ENCODE measurements at regions of chr12 and their contacts with region 1.

Region 1: GRCh38 chr12:6851921-6852650 is at the start of gene USP5:
- DNase-seq: peak; percentile 95
- CTCF ChIP-seq: no peak

Region 2: GRCh38 chr12:6833189-6833890 is 18.7 kb before region 1 on chr12:
- CTCF ChIA-PET with region 1: interaction called, 46 read pairs
- POLR2A ChIA-PET with region 1: interaction called, 5 read pairs
- DNase-seq: no peak
- CTCF ChIP-seq: no peak

Region 3: DNA sequence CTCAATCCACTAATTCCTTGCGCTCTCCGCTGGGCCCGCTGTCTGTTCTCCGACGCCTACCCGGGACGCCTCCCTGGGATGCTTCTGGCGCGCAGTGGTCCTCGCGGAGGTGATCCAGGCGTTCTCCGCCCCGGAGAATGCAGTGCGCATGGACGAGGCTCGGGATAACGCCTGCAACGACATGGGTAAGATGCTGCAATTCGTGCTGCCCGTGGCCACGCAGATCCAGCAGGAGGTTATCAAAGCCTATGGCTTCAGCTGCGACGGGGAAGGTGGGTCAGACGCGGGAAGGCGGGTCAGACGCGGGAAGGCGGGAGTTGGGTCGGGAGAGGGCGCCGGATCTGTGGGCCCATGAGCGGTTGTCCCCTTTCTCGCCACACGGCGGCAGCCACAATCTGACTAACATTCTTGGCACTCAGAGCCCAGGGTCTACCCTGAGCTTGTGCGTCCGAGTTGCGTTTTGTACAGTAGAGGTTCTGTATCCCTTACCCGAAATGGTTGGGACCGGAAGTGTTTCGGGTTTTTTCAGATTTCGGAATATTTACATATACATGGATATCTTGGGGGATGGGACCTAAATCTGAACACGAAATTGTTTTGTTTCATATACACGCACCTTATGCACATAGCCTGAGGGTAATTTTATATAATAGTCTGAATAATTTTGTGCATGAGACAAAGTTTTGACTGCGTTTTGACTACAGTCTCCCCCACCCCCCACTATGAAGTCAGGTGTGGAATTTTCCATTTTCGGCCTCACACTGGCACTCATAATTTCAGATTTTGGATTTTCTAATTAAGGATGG is 92.5 kb after region 1 on chr12:
- CTCF ChIA-PET with region 1: interaction called, 3 read pairs
- POLR2A ChIA-PET with region 1: interaction called, 10 read pairs
- DNase-seq: peak; percentile 79
- CTCF ChIP-seq: peak; percentile 94